Mammary epithelial cell (primary cell): ENCODE measurements at regions of chr5 and their contacts with region 1.

Region 1: GRCh38 chr5:95554647-95555548 is at the starts of genes ARSK and SKIC3:
- DNase-seq: peak; percentile 99
- H3K4me3 ChIP-seq: peak within 1 kb of the TSS; percentile 72 to 96 (median 86)
- H3K27ac ChIP-seq: peak within 1 kb of the TSS; percentile 87
- H3K4me1 ChIP-seq: peaks cover 5% of the 10 kb centered on the region
- H3K27me3 ChIP-seq: no peaks in the 10 kb centered on the region
- CTCF ChIP-seq: peak; percentile 25 to 56
- total RNA-seq, gene ARSK: 7.6 to 11.2 TPM
- total RNA-seq, gene SKIC3: 83.8 to 123 TPM

Region 2: DNA sequence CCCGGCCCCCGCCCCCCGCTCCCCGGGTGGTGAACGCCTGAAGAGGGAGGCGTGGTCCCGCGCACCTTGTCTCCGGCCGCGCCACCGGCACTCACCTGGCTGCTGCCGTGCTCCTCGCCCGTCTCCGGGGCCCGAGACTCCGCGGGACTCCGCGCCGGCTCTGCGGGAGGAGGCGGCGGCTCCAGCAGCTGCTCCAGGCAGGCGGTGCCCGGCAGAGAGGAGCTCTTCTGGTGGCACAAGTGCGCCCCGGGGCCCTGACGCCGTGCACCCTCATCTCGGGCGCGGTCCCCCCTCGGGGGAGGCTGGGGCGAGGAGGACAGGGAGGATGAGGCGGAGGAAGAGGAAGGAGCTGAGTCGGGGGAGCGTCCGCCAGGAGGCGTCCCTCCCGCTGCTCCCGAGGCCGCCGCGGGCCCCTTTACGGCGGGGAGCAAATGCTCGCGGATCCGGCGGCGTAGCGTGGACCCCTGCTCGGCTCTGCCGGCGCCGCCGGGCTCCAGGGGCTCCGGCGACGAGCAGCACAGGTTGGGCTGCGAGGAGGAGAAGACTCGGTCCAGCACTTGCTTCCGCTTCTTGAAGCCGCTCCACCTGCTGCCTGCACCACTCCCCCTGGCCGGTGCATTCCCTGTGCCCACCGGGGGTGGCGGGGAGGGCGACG is 271.0 kb before region 1 on chr5:
- CTCF ChIA-PET with region 1: no interaction called
- dilution Hi-C with region 1: no loop called
- in situ Hi-C with region 1: no loop called
- intact Hi-C with region 1: loop called (anchors 10 kb)
- DNase-seq: peak; percentile 35
- H3K4me3 ChIP-seq: peak overlapping the region; percentile 48 to 62 (median 57)
- H3K27ac ChIP-seq: no peak overlapping the region
- H3K4me1 ChIP-seq: peaks cover 23% of the 10 kb centered on the region
- H3K27me3 ChIP-seq: peaks cover 18% of the 10 kb centered on the region
- CTCF ChIP-seq: peak in 1 of 2 donors; percentile 50

Region 3: GRCh38 chr5:95454536-95454935 is 100.4 kb before region 1 on chr5:
- CTCF ChIA-PET with region 1: no interaction called
- dilution Hi-C with region 1: no loop called
- in situ Hi-C with region 1: no loop called
- intact Hi-C with region 1: no loop called
- DNase-seq: no peak
- H3K4me3 ChIP-seq: no peak overlapping the region
- H3K27ac ChIP-seq: no peak overlapping the region
- H3K4me1 ChIP-seq: no peaks in the 10 kb centered on the region
- H3K27me3 ChIP-seq: no peaks in the 10 kb centered on the region
- CTCF ChIP-seq: no peak

Region 4: GRCh38 chr5:95617052-95617451 is 62.2 kb after region 1 on chr5:
- CTCF ChIA-PET with region 1: no interaction called
- dilution Hi-C with region 1: no loop called
- in situ Hi-C with region 1: no loop called
- intact Hi-C with region 1: loop called (anchors 1 kb)
- DNase-seq: peak; percentile 97
- H3K4me3 ChIP-seq: peak overlapping the region; percentile 38 to 69 (median 60)
- H3K27ac ChIP-seq: peak overlapping the region; percentile 99
- H3K4me1 ChIP-seq: peaks cover 22% of the 10 kb centered on the region
- H3K27me3 ChIP-seq: no peaks in the 10 kb centered on the region
- CTCF ChIP-seq: no peak

Region 5: DNA sequence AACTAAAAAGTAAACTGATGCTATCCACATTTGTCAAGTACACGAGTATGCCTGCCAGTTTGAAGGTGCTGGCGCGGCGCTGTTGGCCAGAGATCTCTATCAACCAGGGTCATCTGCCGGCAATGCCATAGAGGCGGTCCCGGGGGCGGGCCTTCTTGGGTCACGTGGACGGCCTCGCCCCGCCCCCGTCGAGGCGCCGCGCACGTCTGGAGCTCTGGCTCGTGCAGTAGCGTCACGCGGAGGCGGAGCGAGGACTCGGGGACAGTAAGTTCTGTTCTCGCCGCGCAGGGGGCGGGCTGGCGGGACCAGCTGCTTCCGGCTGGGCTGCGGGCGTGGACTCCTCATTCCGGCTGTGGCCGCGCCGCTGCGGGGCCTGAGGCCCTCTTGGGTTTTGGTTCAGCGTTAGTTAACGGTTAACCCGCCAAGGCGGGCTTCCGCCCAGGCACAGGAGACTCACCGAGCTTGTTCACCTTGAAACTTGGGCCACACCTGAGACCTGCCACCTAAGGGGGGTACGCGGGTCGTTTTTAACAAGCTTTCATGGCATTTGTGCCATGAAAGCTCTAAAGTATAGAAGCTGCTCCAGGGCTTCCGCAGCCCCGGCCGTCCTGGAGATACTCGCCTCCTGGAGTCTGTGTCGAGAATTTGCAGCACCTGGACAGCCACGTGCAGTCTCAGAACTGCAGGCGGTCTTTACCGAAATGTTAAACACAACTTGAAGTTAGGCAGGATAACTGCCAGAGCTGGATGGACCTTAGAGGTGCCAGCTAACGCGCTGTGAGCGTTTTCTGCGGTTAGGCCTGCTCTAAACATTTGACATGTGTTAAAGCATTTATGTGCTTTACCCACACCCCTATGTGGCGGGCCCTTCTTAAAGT is 91.9 kb after region 1 on chr5 and contains the start of gene RFESD:
- CTCF ChIA-PET with region 1: no interaction called
- dilution Hi-C with region 1: no loop called
- in situ Hi-C with region 1: loop called in 1 of 2 experiments (anchors 10 kb)
- intact Hi-C with region 1: loop called (anchors 2 kb)
- DNase-seq: peak; percentile 91
- H3K4me3 ChIP-seq: peak within 1 kb of the TSS; percentile 37 to 59 (median 51)
- H3K27ac ChIP-seq: peak within 1 kb of the TSS; percentile 84
- H3K4me1 ChIP-seq: no peaks in the 10 kb centered on the region
- H3K27me3 ChIP-seq: no peaks in the 10 kb centered on the region
- CTCF ChIP-seq: peak in 1 of 2 donors; percentile 29
- total RNA-seq, gene RFESD: 2.1 to 3.0 TPM

Region 6: DNA sequence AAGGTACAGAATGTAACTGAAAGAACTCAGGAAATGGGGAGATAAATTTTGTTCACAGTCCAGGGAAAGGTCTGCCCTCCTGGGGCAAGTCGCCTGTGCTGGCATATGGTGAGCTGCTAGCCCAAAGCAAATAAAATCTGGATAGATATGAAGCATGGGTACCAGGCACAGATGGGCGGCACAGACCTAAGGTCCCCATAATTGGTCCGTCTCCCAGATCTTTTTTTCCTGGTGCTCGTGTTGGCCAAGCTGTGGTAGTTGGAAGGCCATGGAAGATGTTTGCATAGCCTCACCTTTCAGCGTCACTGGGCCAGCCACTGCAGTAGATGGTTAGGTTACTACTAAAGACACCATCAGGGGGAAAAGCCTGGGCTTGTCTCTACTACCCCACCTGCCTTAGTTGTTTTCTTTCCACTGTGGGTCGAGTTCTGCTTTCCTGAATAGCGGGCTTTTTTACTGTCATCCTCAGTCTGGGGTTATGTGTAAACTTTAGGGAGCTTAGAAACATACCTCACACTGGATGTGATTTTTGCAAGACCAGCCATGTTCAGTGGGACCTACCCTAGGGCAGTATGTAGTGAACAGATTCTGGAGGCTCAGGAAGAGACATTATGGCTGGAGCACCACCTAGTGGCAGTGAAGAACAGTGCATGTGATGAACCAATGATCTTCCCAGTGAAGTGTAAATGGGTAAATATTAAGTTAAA is 291.8 kb after region 1 on chr5:
- CTCF ChIA-PET with region 1: no interaction called
- dilution Hi-C with region 1: no loop called
- in situ Hi-C with region 1: no loop called
- intact Hi-C with region 1: loop called (anchors 5 kb)
- DNase-seq: peak; percentile 67
- H3K4me3 ChIP-seq: no peak overlapping the region
- H3K27ac ChIP-seq: no peak overlapping the region
- H3K4me1 ChIP-seq: peaks cover 7% of the 10 kb centered on the region
- H3K27me3 ChIP-seq: no peaks in the 10 kb centered on the region
- CTCF ChIP-seq: peak; percentile 96 to 97